ENCODE measurements at regions of chr12 and their contacts with region 1.

Region 1: GRCh38 chr12:94603434-94604365 is 46.7 kb downstream of the TMCC3 start:
- DNase-seq: peak; percentile 36
- H3K4me3 Mint-ChIP-seq: no peak overlapping the region
- H3K27ac Mint-ChIP-seq: no peak overlapping the region
- H3K4me1 Mint-ChIP-seq: no peaks in the 10 kb centered on the region
- H3K27me3 Mint-ChIP-seq: peaks cover 25% of the 10 kb centered on the region

Region 2: DNA sequence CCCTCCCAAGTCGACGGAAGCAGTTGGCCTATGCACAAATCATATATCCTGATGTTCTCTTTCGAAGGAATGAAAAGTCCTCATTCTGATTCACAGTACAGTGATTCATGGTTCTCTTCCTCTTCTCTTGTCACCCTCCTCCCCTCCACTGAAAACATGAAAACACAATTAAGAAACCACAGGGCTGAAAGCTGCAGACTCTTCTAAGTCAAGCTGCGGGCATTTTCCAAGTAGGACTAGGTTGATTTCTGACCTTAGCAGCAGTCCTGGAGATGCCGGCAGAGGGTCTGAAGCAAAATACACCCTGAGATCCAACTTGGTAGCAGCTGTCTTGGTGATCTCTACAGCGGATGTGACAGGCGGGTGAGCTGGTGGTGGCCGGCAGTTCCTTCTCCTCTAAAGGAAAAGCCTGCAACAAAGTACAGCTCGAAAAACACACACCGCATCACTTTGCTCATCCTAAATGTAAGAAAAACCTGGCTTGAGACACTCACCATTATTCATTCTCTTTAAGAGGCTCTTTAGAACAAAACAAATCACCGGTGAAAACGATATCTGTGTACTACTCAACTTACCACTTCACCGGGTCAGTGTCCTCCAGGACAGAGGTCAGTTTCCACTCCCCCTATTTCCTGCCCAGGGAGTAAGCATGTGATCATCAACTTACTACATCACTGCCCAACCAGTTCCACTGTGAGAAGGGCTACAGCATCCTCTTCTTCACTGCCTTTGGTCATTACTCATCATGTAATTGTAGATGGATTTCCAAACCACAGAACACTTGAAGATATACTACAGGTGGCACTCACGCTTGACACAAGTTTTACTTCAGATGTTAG is 40.7 kb after region 1 on chr12:
- intact Hi-C with region 1: loop called (anchors 1 kb)
- DNase-seq: no peak
- H3K4me3 Mint-ChIP-seq: peak overlapping the region; percentile 63
- H3K27ac Mint-ChIP-seq: peak overlapping the region; percentile 7
- H3K4me1 Mint-ChIP-seq: peaks cover 46% of the 10 kb centered on the region
- H3K27me3 Mint-ChIP-seq: peaks cover 68% of the 10 kb centered on the region

Region 3: GRCh38 chr12:94649349-94650142 is 45.8 kb after region 1 on chr12:
- intact Hi-C with region 1: loop called (anchors 1 kb)
- DNase-seq: peak; percentile 21
- H3K4me3 Mint-ChIP-seq: peak overlapping the region; percentile 80
- H3K27ac Mint-ChIP-seq: peak overlapping the region; percentile 18
- H3K4me1 Mint-ChIP-seq: peaks cover 11% of the 10 kb centered on the region
- H3K27me3 Mint-ChIP-seq: peaks cover 73% of the 10 kb centered on the region

Region 4: DNA sequence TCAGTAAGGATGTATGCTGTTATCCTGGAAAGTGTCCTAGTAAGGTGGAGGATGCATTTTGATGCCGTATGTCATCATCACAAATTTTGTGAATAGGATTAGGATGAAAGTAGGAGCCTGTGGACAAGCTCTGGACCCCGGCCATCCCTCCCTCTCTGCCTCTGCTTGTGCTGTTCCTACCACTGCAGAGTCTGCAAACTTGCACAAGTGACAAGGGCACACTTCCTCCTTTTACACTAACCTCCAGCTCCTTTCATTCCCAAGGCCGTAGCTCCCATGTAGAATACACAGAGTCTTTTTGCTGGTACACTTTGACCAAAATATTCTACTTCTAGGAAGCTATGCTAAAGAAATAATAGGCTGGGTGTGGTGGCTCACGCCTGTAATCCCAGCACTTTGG is 60.0 kb after region 1 on chr12:
- intact Hi-C with region 1: no loop called
- DNase-seq: no peak
- H3K4me3 Mint-ChIP-seq: no peak overlapping the region
- H3K27ac Mint-ChIP-seq: no peak overlapping the region
- H3K4me1 Mint-ChIP-seq: no peaks in the 10 kb centered on the region
- H3K27me3 Mint-ChIP-seq: peaks cover 17% of the 10 kb centered on the region

Region 5: DNA sequence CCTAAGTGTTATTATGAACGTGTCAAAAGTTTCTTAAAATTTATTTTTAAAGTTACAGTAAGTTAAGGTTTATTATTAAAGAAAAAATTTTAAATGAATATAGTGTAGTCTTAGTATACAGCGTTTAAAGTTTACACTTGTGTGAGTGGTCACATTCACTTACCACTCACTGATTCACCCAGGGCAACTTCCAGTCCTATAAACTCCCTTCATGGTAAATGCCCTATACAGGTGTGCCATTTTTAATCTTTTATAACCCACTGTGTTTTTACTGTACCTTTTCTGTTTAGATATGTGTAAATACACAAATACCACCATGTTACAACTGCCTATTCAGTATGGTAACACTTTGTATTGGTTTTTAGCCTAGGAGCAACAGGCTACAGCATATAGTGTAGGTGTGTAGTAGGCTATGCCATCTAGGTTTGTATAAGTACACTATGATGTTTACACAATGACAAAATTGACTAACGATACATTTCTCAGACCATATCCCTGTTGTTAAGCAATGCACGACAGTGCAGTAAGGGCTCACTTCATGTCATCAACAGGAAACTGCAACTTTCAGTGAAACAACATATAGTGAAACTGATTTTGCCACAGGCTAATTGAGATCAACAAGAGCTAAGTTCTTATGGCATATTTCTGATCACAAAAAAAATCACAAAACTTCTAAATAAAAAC is 158.7 kb after region 1 on chr12:
- intact Hi-C with region 1: loop called (anchors 1 kb)
- DNase-seq: no peak
- H3K4me3 Mint-ChIP-seq: no peak overlapping the region
- H3K27ac Mint-ChIP-seq: no peak overlapping the region
- H3K4me1 Mint-ChIP-seq: peaks cover 16% of the 10 kb centered on the region
- H3K27me3 Mint-ChIP-seq: peaks cover 7% of the 10 kb centered on the region

Region 6: DNA sequence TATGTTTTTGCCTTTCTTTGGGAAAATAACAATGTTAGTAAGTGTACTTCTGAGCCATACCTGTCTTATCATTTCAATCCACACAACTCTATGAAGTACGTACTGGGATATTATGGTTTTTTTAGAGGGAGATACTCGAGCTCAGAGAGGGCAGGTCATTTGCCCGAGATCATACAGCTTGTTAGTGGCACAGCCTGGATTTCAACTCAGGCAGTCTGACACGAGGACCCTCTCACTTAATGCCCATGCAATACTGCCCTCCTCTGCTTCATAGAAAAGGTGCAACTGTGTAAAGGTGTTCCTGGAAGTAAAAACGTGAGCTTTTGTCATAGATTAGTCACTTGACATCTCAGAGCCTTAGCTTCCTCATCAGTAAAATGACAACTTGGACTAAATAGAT is 271.8 kb after region 1 on chr12:
- intact Hi-C with region 1: loop called (anchors 10 kb)
- DNase-seq: no peak
- H3K4me3 Mint-ChIP-seq: no peak overlapping the region
- H3K27ac Mint-ChIP-seq: no peak overlapping the region
- H3K4me1 Mint-ChIP-seq: peaks cover 6% of the 10 kb centered on the region
- H3K27me3 Mint-ChIP-seq: peaks cover 61% of the 10 kb centered on the region

Region 7: GRCh38 chr12:94980577-94980976 is 376.9 kb after region 1 on chr12:
- intact Hi-C with region 1: loop called (anchors 1 kb)
- DNase-seq: no peak
- H3K4me3 Mint-ChIP-seq: no peak overlapping the region
- H3K27ac Mint-ChIP-seq: no peak overlapping the region
- H3K4me1 Mint-ChIP-seq: peaks cover 10% of the 10 kb centered on the region
- H3K27me3 Mint-ChIP-seq: no peaks in the 10 kb centered on the region

Region 8: DNA sequence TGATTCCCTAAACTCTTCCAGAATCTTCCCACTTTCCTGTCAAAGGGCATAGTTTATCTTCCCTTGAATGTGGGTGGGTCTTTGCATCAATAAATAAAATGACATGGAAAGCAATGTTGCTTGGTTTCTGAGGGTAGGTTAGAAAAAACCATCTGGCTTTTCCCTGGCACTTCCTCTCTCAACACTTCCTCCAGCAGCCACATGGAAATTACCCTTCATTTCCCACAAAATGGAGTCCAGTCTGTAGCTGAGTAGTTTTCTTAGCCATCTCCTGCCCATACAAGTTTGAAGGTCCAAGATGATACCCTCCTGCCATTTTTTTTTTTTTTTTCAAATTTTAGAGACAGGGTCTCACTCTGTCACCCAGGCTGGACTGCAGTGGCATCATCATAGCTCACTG is 410.9 kb after region 1 on chr12:
- intact Hi-C with region 1: no loop called
- DNase-seq: no peak
- H3K4me3 Mint-ChIP-seq: no peak overlapping the region
- H3K27ac Mint-ChIP-seq: no peak overlapping the region
- H3K4me1 Mint-ChIP-seq: no peaks in the 10 kb centered on the region
- H3K27me3 Mint-ChIP-seq: peaks cover 2% of the 10 kb centered on the region

Region 9: DNA sequence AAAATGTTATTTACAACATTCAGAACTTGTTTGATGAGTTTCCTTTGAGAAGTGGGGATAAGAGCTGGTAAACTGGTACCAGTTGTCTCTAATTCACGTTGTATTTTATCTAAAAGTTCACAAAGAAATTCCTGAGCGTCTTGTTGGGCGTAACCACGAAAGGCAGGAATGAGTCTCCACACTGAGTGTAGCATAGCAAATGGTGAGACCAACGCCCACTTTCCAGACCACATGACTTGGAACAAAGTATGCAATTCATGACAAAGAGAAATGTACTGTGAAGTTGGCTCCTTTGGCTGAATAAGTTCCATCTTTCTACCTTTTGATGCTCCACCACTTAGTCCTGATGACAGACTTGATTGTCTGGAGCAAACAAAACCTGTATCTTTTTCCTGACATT is 929.2 kb after region 1 on chr12:
- intact Hi-C with region 1: loop called (anchors 2 kb)
- DNase-seq: no peak
- H3K4me3 Mint-ChIP-seq: no peak overlapping the region
- H3K27ac Mint-ChIP-seq: no peak overlapping the region
- H3K4me1 Mint-ChIP-seq: peaks cover 7% of the 10 kb centered on the region
- H3K27me3 Mint-ChIP-seq: no peaks in the 10 kb centered on the region

Measured in activated T-helper 1 cell treated with anti-CD3 and anti-CD28 coated beads, Interleukin-12 subunit alpha, Interleukin-12 subunit beta, Interleukin-2, Interleukin-4 antibody, amounts not matched to agents 30 ng/mL and 10 ng/mL and 1 ng/mL, durations not matched to agents 14 hours and 24 hours and 36 hours (primary cell).